ENCODE measurements at regions of chr15 and their contacts with region 1.

Region 1: GRCh38 chr15:38252481-38253412 is at the start of gene SPRED1:
- DNase-seq: peak in 1 of 2 donors; percentile 86
- H3K4me3 ChIP-seq: peak within 1 kb of the TSS; percentile 90 to 95
- H3K27ac ChIP-seq: peak within 1 kb of the TSS; percentile 99 to 100
- H3K4me1 ChIP-seq: peaks cover 0 to 14% of the 10 kb centered on the region in 2 donors
- H3K27me3 ChIP-seq: no peaks in the 10 kb centered on the region
- CTCF ChIP-seq: no peak
- total RNA-seq, gene SPRED1: 9.4 TPM

Region 2: GRCh38 chr15:38129531-38130204 is 123.1 kb before region 1 on chr15:
- intact Hi-C with region 1: loop called (anchors 2 kb)
- DNase-seq: peak; percentile 65 to 93
- H3K4me3 ChIP-seq: peak overlapping the region; percentile 21 to 45
- H3K27ac ChIP-seq: peak overlapping the region; percentile 63 to 65
- H3K4me1 ChIP-seq: peaks cover 0 to 5% of the 10 kb centered on the region in 2 donors
- H3K27me3 ChIP-seq: no peaks in the 10 kb centered on the region
- CTCF ChIP-seq: no peak

Region 3: GRCh38 chr15:38201714-38202113 is 51.0 kb before region 1 on chr15:
- intact Hi-C with region 1: no loop called
- DNase-seq: no peak
- H3K4me3 ChIP-seq: no peak overlapping the region
- H3K27ac ChIP-seq: no peak overlapping the region
- H3K4me1 ChIP-seq: no peaks in the 10 kb centered on the region
- H3K27me3 ChIP-seq: no peaks in the 10 kb centered on the region
- CTCF ChIP-seq: no peak

Region 4: DNA sequence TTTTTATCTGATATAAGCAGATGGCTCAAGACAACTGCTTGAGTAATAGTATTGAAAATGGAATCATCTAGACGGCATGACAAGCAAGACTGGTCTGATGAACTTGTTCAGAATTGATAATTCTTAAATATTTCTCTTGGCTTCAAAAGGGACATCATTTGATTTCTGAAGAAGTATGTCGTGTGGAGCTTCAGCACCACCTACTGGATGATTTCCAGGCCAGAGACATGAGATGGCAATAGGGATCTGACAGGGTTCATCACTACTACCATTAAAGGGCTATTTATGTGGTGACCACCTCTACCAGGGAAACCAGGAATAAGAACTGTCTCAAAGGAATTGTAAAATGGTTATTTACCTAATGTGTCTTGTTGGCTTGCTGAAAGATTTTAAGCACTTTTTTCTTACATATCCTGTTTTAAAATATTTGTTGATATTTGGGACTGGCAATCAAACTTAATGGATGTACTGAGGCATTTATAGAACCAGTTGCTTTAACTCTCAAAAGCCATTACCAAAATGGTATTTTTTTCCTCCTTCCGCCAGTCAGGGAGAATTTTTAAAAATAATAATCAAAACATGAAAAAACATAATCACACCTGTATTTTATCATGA is 101.7 kb after region 1 on chr15:
- intact Hi-C with region 1: loop called (anchors 5 kb)
- DNase-seq: peak in 1 of 2 donors; percentile 72
- H3K4me3 ChIP-seq: no peak overlapping the region
- H3K27ac ChIP-seq: no peak overlapping the region
- H3K4me1 ChIP-seq: no peaks in the 10 kb centered on the region
- H3K27me3 ChIP-seq: no peaks in the 10 kb centered on the region
- CTCF ChIP-seq: peak; percentile 58 to 70 (median 58)

Region 5: GRCh38 chr15:38414357-38414756 is 161.6 kb after region 1 on chr15:
- intact Hi-C with region 1: loop called (anchors 5 kb)
- DNase-seq: peak in 1 of 2 donors; percentile 80
- H3K4me3 ChIP-seq: no peak overlapping the region
- H3K27ac ChIP-seq: no peak overlapping the region
- H3K4me1 ChIP-seq: no peaks in the 10 kb centered on the region
- H3K27me3 ChIP-seq: no peaks in the 10 kb centered on the region
- CTCF ChIP-seq: peak; percentile 52 to 79 (median 57)

Measured in ascending aorta (tissue), 2 donors.